ENCODE measurements at regions of chr22 and their contacts with region 1.

Region 1: DNA sequence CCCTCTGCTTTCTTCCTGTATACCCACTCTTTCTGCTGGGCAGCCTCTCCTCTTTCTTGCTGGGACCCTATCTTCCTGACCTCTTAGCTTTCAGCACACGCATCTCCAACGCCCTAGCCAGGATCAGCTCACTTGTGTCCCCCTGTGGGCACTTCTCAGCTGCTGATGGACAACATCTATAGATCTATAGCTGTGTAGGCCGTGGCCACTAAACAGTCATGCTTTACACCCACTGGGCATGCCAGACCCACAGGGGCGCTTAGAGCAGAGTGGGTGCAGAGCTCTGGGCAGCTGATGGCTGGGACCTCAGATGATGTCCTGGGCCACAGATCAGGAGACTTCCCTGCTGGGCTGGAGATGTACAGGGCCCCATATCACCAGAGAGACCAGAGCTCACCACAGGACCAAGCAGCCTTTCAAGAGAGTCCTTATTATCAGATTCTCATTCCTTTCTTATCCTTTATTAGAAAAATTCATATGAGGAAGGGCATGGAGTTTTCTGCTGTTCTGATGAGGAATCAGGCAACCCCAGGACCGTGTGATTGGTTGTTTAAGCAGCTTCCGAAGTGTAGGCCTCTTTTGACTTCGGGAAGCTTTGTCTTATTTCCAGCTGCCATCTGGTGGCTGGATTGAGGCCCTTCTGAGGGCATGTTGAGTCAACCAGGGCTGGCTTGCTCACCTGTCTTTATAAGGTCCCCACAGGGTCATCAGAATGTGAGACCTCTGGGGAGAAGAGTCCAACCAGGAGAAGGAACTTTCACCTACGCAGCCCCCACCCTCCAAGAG is 60.5 kb downstream of the OSBP2 start:
- DNase-seq: peak in 2 of 3 donors; percentile 16 to 33
- H3K4me3 ChIP-seq: no peak overlapping the region
- H3K4me3 Mint-ChIP-seq: no peak overlapping the region
- H3K27ac ChIP-seq: no peak overlapping the region
- H3K27ac Mint-ChIP-seq: no peak overlapping the region
- H3K4me1 ChIP-seq: no peaks in the 10 kb centered on the region
- H3K4me1 Mint-ChIP-seq: no peaks in the 10 kb centered on the region
- H3K27me3 ChIP-seq: no peaks in the 10 kb centered on the region
- H3K27me3 Mint-ChIP-seq: peaks cover 5 to 12% (median 10%) of the 10 kb centered on the region in 3 donors
- CTCF ChIP-seq: peak; percentile 36

Region 2: GRCh38 chr22:30562366-30562765 is 192.8 kb before region 1 on chr22:
- intact Hi-C with region 1: loop called in 1 of 2 experiments (anchors 10 kb)
- DNase-seq: no peak
- H3K4me3 ChIP-seq: no peak overlapping the region
- H3K4me3 Mint-ChIP-seq: no peak overlapping the region
- H3K27ac ChIP-seq: no peak overlapping the region
- H3K27ac Mint-ChIP-seq: no peak overlapping the region
- H3K4me1 ChIP-seq: no peaks in the 10 kb centered on the region
- H3K4me1 Mint-ChIP-seq: no peaks in the 10 kb centered on the region
- H3K27me3 ChIP-seq: no peaks in the 10 kb centered on the region
- H3K27me3 Mint-ChIP-seq: peaks cover 0 to 5% (median 2%) of the 10 kb centered on the region in 3 donors
- CTCF ChIP-seq: no peak

Region 3: GRCh38 chr22:30830907-30831306 is 75.7 kb after region 1 on chr22:
- intact Hi-C with region 1: no loop called
- DNase-seq: no peak
- H3K4me3 ChIP-seq: no peak overlapping the region
- H3K4me3 Mint-ChIP-seq: no peak overlapping the region
- H3K27ac ChIP-seq: no peak overlapping the region
- H3K27ac Mint-ChIP-seq: no peak overlapping the region
- H3K4me1 ChIP-seq: no peaks in the 10 kb centered on the region
- H3K4me1 Mint-ChIP-seq: no peaks in the 10 kb centered on the region
- H3K27me3 ChIP-seq: peaks cover 0 to 3% of the 10 kb centered on the region in 2 donors
- H3K27me3 Mint-ChIP-seq: peaks cover 2 to 14% (median 9%) of the 10 kb centered on the region in 3 donors
- CTCF ChIP-seq: no peak

Region 4: GRCh38 chr22:31055635-31056159 is 300.5 kb after region 1 on chr22:
- intact Hi-C with region 1: no loop called
- DNase-seq: no peak
- H3K4me3 ChIP-seq: no peak overlapping the region
- H3K4me3 Mint-ChIP-seq: no peak overlapping the region
- H3K27ac ChIP-seq: no peak overlapping the region
- H3K27ac Mint-ChIP-seq: no peak overlapping the region
- H3K4me1 ChIP-seq: no peaks in the 10 kb centered on the region
- H3K4me1 Mint-ChIP-seq: peaks cover 4% of the 10 kb centered on the region
- H3K27me3 ChIP-seq: no peaks in the 10 kb centered on the region
- H3K27me3 Mint-ChIP-seq: peaks cover 0 to 9% (median 3%) of the 10 kb centered on the region in 3 donors
- CTCF ChIP-seq: no peak